ENCODE measurements at regions of chr3 and their contacts with region 1.

Region 1: DNA sequence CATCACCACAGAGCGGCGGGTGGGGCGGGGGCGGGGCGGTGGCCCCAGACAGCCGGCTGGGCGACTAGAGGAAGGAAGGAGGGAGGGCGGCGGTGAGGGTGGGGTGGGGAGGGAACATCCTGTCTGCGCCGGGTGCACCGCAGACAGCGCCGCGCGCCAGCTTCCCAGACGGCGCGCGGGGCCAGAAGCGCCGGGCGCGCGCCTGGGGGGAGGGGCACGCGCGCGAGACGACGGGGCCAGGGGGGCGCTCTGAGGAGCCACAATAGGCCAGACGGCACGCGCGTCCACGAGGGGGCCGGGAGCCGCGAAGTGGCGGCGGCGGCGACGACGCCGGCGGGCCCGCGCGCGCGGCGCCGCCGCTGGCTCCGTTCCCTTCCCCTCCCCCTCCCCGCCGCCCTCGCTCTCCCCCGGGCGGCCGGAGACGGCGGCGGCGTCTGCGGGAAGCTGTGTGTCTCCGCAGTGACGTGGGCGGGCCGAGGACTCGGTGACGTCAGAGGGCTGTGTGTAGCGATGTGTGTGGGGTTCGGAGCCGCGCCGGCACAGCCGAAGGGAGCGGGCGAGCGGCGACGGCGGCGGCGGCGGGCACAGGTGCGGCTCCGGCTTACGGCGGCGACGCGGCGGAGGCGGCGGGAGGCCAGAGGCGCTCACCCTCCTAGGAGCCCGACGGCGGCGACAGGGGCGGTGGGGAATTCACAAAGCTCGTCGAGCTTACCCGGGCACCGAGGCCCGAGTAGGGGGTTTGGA is at the start of gene SKIL:
- DNase-seq: peak; percentile 93 to 100 (median 96)
- ATAC-seq: peak; percentile 74
- H3K4me3 ChIP-seq: peak within 1 kb of the TSS; percentile 73
- H3K4me3 Mint-ChIP-seq: peak within 1 kb of the TSS; percentile 98
- H3K27ac ChIP-seq: peak within 1 kb of the TSS; percentile 89 to 97
- H3K27ac Mint-ChIP-seq: peak within 1 kb of the TSS; percentile 98
- H3K4me1 ChIP-seq: peaks cover 35% of the 10 kb centered on the region
- H3K4me1 Mint-ChIP-seq: peaks cover 63% of the 10 kb centered on the region
- H3K27me3 ChIP-seq: no peaks in the 10 kb centered on the region
- H3K27me3 Mint-ChIP-seq: no peaks in the 10 kb centered on the region
- CTCF ChIP-seq: no peak
- total RNA-seq, gene SKIL: 121 to 130 TPM

Region 2: GRCh38 chr3:169772897-169773828 is 584.2 kb before region 1 on chr3 and contains the start of gene MYNN:
- CTCF ChIA-PET with region 1: no interaction called
- POLR2A ChIA-PET with region 1: interaction called, 21 read pairs
- intact Hi-C with region 1: loop called in 1 of 2 experiments (anchors 10 kb)
- DNase-seq: peak; percentile 81 to 96 (median 89)
- ATAC-seq: peak; percentile 80
- H3K4me3 ChIP-seq: peak within 1 kb of the TSS; percentile 83
- H3K4me3 Mint-ChIP-seq: peak within 1 kb of the TSS; percentile 98
- H3K27ac ChIP-seq: peak within 1 kb of the TSS; percentile 98 to 100
- H3K27ac Mint-ChIP-seq: peak within 1 kb of the TSS; percentile 100
- H3K4me1 ChIP-seq: peaks cover 22% of the 10 kb centered on the region
- H3K4me1 Mint-ChIP-seq: peaks cover 69% of the 10 kb centered on the region
- H3K27me3 ChIP-seq: no peaks in the 10 kb centered on the region
- H3K27me3 Mint-ChIP-seq: peaks cover 12% of the 10 kb centered on the region
- CTCF ChIP-seq: no peak
- total RNA-seq, gene MYNN: 18.7 to 20.6 TPM

Region 3: DNA sequence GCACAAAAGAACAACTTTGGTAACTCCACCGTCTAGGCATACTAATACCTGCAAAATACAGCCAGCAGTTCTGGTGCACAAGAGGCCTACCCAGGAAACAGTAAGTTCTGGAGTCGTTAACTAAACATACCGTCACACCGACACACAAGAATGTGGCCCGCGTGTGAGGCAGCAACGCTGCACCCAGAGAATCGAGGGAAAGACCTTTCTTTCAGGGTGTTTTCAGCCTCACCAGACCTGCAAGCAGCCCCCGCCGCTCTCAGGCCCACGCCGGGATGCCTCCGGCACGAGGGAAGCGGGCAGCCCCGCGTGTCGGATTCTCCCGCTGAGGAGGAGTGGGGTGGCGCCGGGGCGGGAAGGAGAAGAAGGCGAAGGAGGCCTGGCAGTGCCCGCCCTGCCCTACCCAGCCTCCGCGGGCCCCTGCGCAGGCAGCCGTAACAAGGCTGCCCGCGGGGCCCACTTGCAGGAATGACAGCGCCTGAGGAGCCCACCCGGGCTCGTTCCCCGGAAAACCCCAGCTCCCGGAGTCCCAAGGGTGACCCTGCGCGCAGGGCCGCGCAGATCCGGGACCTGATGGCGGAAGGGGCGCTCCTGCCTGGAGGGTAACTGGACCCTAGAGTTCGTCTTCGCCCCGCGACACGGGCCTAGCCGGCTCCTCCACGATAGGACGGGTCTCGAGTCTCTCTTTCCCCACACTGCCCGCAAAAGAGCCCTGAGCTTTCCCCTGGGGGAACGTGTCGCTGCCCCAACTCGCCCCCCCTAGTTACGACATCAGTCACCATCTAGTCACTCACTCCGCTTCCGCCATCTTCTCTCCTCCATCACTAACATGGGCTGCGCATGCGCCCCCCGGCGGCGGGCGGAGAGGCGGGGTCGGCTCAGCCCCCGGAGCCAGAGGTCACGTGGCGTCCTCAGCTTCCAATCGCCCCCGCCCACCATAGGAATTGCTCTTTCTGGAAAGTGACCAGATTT is 176.2 kb before region 1 on chr3 and contains the start of gene PHC3:
- CTCF ChIA-PET with region 1: no interaction called
- POLR2A ChIA-PET with region 1: interaction called, 11 read pairs
- intact Hi-C with region 1: loop called (anchors 2 to 5 kb)
- DNase-seq: peak; percentile 85 to 96 (median 90)
- ATAC-seq: peak; percentile 64
- H3K4me3 ChIP-seq: peak within 1 kb of the TSS; percentile 96
- H3K4me3 Mint-ChIP-seq: peak within 1 kb of the TSS; percentile 100
- H3K27ac ChIP-seq: peak within 1 kb of the TSS; percentile 97 to 99
- H3K27ac Mint-ChIP-seq: peak within 1 kb of the TSS; percentile 100
- H3K4me1 ChIP-seq: peaks cover 36% of the 10 kb centered on the region
- H3K4me1 Mint-ChIP-seq: peaks cover 40% of the 10 kb centered on the region
- H3K27me3 ChIP-seq: no peaks in the 10 kb centered on the region
- H3K27me3 Mint-ChIP-seq: no peaks in the 10 kb centered on the region
- CTCF ChIP-seq: no peak
- total RNA-seq, gene PHC3: 143 to 150 TPM

Region 4: GRCh38 chr3:170307671-170308403 is 49.5 kb before region 1 on chr3:
- CTCF ChIA-PET with region 1: interaction called, 4 read pairs
- POLR2A ChIA-PET with region 1: interaction called, 6 read pairs
- intact Hi-C with region 1: loop called (anchors 5 kb)
- DNase-seq: no peak
- ATAC-seq: no peak
- H3K4me3 ChIP-seq: no peak overlapping the region
- H3K4me3 Mint-ChIP-seq: no peak overlapping the region
- H3K27ac ChIP-seq: no peak overlapping the region
- H3K27ac Mint-ChIP-seq: no peak overlapping the region
- H3K4me1 ChIP-seq: no peaks in the 10 kb centered on the region
- H3K4me1 Mint-ChIP-seq: no peaks in the 10 kb centered on the region
- H3K27me3 ChIP-seq: no peaks in the 10 kb centered on the region
- H3K27me3 Mint-ChIP-seq: no peaks in the 10 kb centered on the region
- CTCF ChIP-seq: no peak

Region 5: DNA sequence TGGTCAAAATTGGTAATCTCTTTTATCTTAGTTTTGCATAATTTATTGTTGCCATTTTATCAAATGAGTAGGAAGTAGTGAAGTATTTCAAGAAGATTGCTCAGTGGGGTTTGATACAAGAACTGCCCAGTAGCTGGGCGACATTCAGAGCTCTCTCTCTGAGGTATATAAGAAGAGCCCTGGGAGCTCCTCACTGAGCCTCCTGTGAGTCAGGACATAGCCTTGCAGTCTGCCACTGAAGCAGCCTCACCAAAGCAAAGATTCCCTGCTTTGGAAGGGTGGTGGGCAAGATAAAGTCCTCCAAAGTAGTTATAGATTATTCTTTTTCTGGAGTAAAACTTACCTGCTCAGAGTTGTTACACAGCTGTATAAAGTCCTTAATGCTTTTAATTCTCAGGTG is 26.2 kb after region 1 on chr3:
- CTCF ChIA-PET with region 1: no interaction called
- POLR2A ChIA-PET with region 1: interaction called, 5 read pairs
- intact Hi-C with region 1: loop called in 1 of 2 experiments (anchors 1 kb)
- DNase-seq: no peak
- ATAC-seq: no peak
- H3K4me3 ChIP-seq: no peak overlapping the region
- H3K4me3 Mint-ChIP-seq: no peak overlapping the region
- H3K27ac ChIP-seq: no peak overlapping the region
- H3K27ac Mint-ChIP-seq: peak overlapping the region; percentile 12
- H3K4me1 ChIP-seq: no peaks in the 10 kb centered on the region
- H3K4me1 Mint-ChIP-seq: peaks cover 13% of the 10 kb centered on the region
- H3K27me3 ChIP-seq: no peaks in the 10 kb centered on the region
- H3K27me3 Mint-ChIP-seq: no peaks in the 10 kb centered on the region
- CTCF ChIP-seq: no peak

Measured in CD4-positive, alpha-beta T cell (primary cell).